Naive thymus-derived CD4-positive, alpha-beta T cell (primary cell): ENCODE measurements at regions of chr12 and their contacts with region 1.

Region 1: DNA sequence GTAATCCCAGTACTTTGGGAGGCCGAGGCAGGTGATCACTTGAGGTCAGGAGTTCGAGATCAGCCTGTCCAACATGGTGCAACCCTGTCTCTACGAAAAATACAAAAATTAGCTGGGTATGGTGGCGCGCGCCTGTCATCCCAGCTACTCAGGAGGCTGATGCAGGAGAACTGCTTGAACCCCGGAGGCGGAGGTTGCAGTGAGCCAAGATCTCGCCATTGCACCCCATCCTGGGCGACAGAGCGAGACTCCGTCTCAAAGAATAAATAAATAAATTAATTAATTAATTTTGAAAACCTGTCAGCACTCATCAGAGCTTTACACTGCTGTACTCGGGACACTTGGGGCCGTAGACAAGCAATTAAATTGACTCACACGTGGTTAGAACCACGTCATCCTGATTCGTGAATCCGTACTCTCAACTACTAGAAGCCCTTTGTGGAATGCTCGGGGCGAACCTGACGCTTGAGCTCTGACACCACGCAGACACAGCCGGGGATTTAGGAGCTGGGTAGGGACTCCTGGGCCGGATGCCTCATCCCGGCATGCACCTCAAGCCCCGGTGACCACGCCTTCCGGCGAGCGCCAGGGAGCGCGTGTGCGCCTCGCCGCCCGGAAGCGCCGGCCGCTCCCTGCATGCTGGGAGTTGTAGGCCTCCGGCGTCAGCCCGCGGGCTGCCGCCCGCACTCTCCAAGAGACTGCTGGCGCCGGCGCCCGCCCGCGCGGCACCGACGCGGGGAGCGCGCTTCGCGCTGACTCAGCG is at the start of gene XPOT:
- DNase-seq: peak; percentile 85 to 94 (median 92)
- ATAC-seq: peak; percentile 97
- H3K4me3 ChIP-seq: peak within 1 kb of the TSS; percentile 81
- H3K4me3 Mint-ChIP-seq: peak within 1 kb of the TSS; percentile 90 to 99 (median 96)
- H3K27ac ChIP-seq: peak within 1 kb of the TSS; percentile 82
- H3K27ac Mint-ChIP-seq: peak within 1 kb of the TSS; percentile 84 to 98 (median 95)
- H3K4me1 ChIP-seq: peaks cover 0 to 8% of the 10 kb centered on the region in 2 donors
- H3K4me1 Mint-ChIP-seq: peaks cover 8 to 41% (median 25%) of the 10 kb centered on the region in 7 donors
- H3K27me3 ChIP-seq: no peaks in the 10 kb centered on the region
- H3K27me3 Mint-ChIP-seq: no peaks in the 10 kb centered on the region
- total RNA-seq, gene XPOT: 46.6 to 118 (median 75.1) TPM

Region 2: GRCh38 chr12:64385468-64385867 is 18.4 kb before region 1 on chr12:
- CTCF ChIA-PET with region 1: interaction called, 3 read pairs
- POLR2A ChIA-PET with region 1: interaction called, 7 read pairs
- intact Hi-C with region 1: loop called (anchors 1 kb)
- DNase-seq: peak in 1 of 9 donors; percentile 58
- ATAC-seq: peak; percentile 9
- H3K4me3 ChIP-seq: no peak overlapping the region
- H3K4me3 Mint-ChIP-seq: peak overlapping the region; percentile 35 to 86 (median 63)
- H3K27ac ChIP-seq: peak overlapping the region; percentile 52
- H3K27ac Mint-ChIP-seq: peak overlapping the region; percentile 81 to 93 (median 87)
- H3K4me1 ChIP-seq: peaks cover 5 to 25% of the 10 kb centered on the region in 2 donors
- H3K4me1 Mint-ChIP-seq: peaks cover 24 to 55% (median 47%) of the 10 kb centered on the region in 7 donors
- H3K27me3 ChIP-seq: no peaks in the 10 kb centered on the region
- H3K27me3 Mint-ChIP-seq: peaks cover 0 to 5% (median 0%) of the 10 kb centered on the region in 5 donors

Region 3: DNA sequence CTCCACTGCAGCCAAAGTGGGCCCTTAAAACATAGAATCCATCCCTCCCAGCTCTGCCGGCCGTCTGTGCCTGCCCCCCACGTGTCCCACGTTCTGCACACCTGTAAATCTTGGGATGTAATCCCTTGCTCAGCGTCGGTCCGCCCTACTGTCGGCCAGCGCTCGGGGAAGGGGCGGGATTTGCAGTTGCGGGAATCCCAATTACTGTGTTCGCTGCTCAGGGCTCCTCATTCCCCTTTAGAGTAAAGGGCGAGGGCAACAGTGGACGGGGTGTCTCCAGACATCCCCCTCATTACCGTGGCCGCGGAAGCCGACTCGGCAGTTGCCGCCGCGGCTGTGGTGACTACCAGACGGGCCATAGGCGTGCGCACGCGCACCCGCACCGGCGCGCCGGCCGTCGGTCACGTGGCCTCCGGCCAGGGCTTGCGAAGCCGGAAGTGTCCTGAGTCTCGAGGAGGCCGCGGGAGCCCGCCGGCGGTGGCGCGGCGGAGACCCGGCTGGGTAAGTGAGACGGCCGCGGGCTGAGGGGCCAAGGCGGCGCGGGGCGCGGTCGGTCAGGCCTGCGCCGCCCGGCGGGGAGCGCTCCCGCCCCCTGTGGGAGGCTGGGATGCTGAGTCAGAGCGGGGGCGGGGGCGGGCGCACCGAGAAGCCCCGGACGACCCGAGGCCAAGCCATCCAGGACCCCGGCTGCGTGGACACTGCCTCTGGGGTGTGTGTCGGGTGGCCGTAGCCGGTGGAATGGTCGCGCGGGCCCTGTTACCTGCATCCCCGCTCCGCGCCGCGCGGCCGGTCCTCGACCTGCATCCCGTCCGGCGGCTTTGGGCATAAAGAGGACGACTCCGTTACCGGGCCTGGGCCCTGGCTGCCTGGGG is 48.0 kb after region 1 on chr12 and contains the start of gene TBK1:
- CTCF ChIA-PET with region 1: interaction called, 3 read pairs
- POLR2A ChIA-PET with region 1: interaction called, 5 read pairs
- intact Hi-C with region 1: loop called (anchors 1 kb)
- DNase-seq: peak in 8 of 9 donors; percentile 21 to 80 (median 34)
- ATAC-seq: peak; percentile 78
- H3K4me3 ChIP-seq: peak within 1 kb of the TSS; percentile 61
- H3K4me3 Mint-ChIP-seq: peak within 1 kb of the TSS; percentile 90 to 99 (median 94)
- H3K27ac ChIP-seq: peak within 1 kb of the TSS; percentile 74
- H3K27ac Mint-ChIP-seq: peak within 1 kb of the TSS; percentile 86 to 95 (median 94)
- H3K4me1 ChIP-seq: peaks cover 19 to 24% of the 10 kb centered on the region in 2 donors
- H3K4me1 Mint-ChIP-seq: peaks cover 20 to 54% (median 41%) of the 10 kb centered on the region in 7 donors
- H3K27me3 ChIP-seq: no peaks in the 10 kb centered on the region
- H3K27me3 Mint-ChIP-seq: no peaks in the 10 kb centered on the region
- total RNA-seq, gene TBK1: 9.0 to 34.0 (median 12.1) TPM

Region 4: DNA sequence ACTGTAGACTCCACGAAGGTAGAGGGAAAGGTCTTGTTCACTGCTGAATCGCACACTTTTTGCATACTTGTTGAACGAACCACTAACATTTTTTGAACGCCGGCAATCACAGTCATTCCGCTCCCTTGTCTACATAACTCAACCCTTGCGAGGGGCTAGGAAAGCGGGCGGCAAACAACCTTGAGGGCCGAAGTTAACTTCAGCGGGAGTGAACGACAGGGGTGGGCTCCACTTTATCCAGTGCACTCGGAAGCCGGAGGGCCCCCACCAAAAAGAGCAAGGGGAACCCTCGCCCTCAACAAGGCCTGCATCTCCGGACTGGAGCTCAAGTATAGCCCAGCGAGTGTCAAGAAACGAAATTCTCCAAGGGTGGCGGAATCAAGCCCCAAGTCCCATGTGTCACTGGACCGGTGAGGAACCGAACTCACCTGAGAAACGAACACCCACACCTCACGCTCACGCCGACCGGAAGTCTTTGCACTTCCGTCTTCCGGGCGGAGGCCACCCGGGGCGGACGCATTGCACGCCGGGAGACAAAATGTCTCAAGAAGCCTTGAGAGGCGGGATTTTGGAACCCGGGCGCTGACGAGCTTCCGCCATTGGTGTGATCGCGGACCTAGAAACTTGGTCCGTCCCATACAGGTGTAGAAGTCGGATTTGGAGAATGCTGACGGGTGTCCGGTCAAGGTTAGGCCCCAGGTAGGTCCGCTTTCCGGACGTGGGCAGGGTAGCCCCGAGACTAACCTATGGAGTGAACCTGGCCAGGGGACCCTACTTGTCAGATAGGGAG is 1726.6 kb after region 1 on chr12 and contains the start of gene LLPH:
- CTCF ChIA-PET with region 1: no interaction called
- POLR2A ChIA-PET with region 1: no interaction called
- intact Hi-C with region 1: loop called (anchors 2 to 10 kb)
- DNase-seq: peak; percentile 72 to 88 (median 86)
- ATAC-seq: peak; percentile 97
- H3K4me3 ChIP-seq: peak within 1 kb of the TSS; percentile 99
- H3K4me3 Mint-ChIP-seq: peak within 1 kb of the TSS; percentile 92 to 98 (median 97)
- H3K27ac ChIP-seq: peak within 1 kb of the TSS; percentile 87
- H3K27ac Mint-ChIP-seq: peak within 1 kb of the TSS; percentile 95 to 99 (median 97)
- H3K4me1 ChIP-seq: peaks cover 19 to 23% of the 10 kb centered on the region in 2 donors
- H3K4me1 Mint-ChIP-seq: peaks cover 37 to 76% (median 63%) of the 10 kb centered on the region in 7 donors
- H3K27me3 ChIP-seq: no peaks in the 10 kb centered on the region
- H3K27me3 Mint-ChIP-seq: no peaks in the 10 kb centered on the region
- total RNA-seq, gene LLPH: 14.7 to 29.1 (median 28.4) TPM